Activated B cell treated with CpG ODN at 0.5 μM for 24 hours (primary cell): ENCODE measurements at regions of chr17 and their contacts with region 1.

Region 1: DNA sequence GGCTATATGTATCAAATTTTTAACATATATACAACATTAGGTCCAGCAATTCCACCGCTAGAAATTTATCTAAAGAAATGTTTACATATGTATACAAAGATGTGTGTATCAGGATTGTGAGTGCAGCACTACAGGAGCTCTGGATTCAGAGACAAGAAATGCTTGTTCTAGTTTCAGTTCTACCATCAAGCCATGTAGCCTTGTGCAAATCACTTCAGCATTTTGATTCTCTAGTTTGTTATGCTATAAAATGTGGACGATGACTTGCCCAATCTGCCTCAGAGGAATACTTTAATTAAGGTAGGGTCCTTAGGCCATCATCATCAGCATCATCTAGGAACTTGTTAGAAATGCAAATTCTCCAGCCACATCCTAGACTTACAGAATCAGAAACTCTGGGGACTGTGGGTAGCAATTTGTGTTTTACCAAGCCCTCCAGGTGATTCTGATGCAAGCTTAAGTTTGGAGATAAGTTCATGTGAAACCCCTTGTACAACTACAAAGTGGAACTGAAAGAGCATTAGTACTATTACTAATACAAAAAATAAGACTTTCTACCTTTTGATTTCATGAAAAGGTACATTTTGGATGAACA is 131.2 kb upstream of the CORO6 start:
- DNase-seq: no peak
- ATAC-seq: peak; percentile 80
- H3K4me3 Mint-ChIP-seq: peak overlapping the region; percentile 5
- H3K27ac Mint-ChIP-seq: peak overlapping the region; percentile 77
- H3K4me1 Mint-ChIP-seq: peaks cover 58% of the 10 kb centered on the region
- H3K27me3 Mint-ChIP-seq: no peaks in the 10 kb centered on the region
- CTCF ChIP-seq: no peak

Region 2: DNA sequence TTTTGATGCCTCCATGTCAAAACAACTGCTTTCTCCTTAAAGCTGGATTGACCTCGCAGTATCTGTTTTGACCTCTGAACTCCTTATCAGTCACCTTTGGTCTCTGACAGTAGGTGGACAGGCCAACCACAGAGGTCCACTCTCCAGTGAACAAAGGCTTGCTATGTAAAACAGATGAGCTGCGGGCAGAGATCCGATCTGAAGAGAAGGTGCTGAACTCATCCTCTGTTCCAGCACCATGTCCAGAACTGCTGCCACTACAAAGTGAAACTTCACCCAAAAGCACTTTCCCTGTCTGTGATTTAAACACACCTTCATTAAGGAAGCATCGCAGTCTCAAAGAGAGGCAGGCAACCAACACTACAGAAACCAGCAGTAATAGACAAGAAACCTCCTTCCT is 13.9 kb before region 1 on chr17:
- CTCF ChIA-PET with region 1: interaction called, 3 read pairs
- POLR2A ChIA-PET with region 1: interaction called, 10 read pairs
- intact Hi-C with region 1: loop called (anchors 2 kb)
- DNase-seq: no peak
- ATAC-seq: no peak
- H3K4me3 Mint-ChIP-seq: no peak overlapping the region
- H3K27ac Mint-ChIP-seq: peak overlapping the region; percentile 74
- H3K4me1 Mint-ChIP-seq: peaks cover 58% of the 10 kb centered on the region
- H3K27me3 Mint-ChIP-seq: no peaks in the 10 kb centered on the region
- CTCF ChIP-seq: no peak

Region 3: GRCh38 chr17:29771551-29771950 is 17.6 kb after region 1 on chr17:
- CTCF ChIA-PET with region 1: no interaction called
- POLR2A ChIA-PET with region 1: no interaction called
- intact Hi-C with region 1: no loop called
- DNase-seq: no peak
- ATAC-seq: no peak
- H3K4me3 Mint-ChIP-seq: no peak overlapping the region
- H3K27ac Mint-ChIP-seq: peak overlapping the region; percentile 90
- H3K4me1 Mint-ChIP-seq: peaks cover 18% of the 10 kb centered on the region
- H3K27me3 Mint-ChIP-seq: no peaks in the 10 kb centered on the region
- CTCF ChIP-seq: no peak